ENCODE measurements at regions of chr2 and their contacts with region 1.

Region 1: GRCh38 chr2:30280611-30281434 is 49.5 kb downstream of the LBH start:
- DNase-seq: no peak

Region 2: GRCh38 chr2:30252723-30253701 is 27.8 kb before region 1 on chr2:
- intact Hi-C with region 1: loop called in 1 of 2 experiments (anchors 2 kb)
- DNase-seq: no peak

Region 3: DNA sequence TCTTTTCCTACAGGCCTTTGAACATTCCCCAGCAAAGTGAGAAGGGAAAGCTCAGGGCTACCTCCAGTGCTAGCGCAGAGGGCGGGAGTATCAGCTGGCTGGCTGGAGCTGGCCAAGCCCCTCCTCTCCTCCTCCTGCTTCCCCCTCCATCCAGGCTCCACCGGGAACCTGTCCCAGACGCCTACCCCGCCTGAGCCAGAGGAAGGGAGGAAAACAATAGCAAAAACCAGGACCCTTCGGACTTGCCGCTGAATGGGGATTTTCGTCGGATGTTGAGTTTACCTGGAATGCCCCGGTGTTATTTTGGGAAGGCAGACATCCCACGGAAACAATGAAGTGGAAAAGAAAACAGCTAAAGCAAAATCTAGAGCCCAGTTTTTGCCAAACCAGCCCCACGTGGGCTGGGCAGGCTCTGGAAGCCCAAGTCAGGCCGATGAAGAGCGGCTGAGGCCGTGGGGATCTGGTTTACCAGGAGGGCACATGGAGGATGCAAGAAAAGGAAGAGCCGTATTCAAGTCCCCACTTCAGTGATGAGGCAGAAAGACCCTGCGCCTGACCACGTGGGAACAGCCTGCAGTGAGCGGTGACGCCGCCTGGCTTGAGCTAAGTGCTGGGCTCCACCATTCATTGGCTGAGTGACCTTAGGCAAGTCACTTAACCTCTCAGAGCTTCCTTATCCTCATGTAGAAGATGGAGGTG is 65.8 kb after region 1 on chr2:
- intact Hi-C with region 1: no loop called
- DNase-seq: peak; percentile 86

Measured in posterior vena cava (tissue), 2 donors.